Dorsolateral prefrontal cortex (tissue), 120 donors: ENCODE measurements at regions of chr1 and their contacts with region 1.

Region 1: GRCh38 chr1:175887981-175888433 is 144.6 kb upstream of the TNR start:
- DNase-seq: peak; percentile 72 to 89 (median 86)
- H3K4me3 ChIP-seq: peak overlapping the region in 12 of 59 donors; percentile 3 to 37 (median 12)
- H3K27ac ChIP-seq: peak overlapping the region in 37 of 59 donors; percentile 1 to 80 (median 55)
- H3K27me3 ChIP-seq: no peaks in the 10 kb centered on the region
- CTCF ChIP-seq: peak; percentile 63 to 96 (median 91)

Region 2: GRCh38 chr1:175481126-175482066 is 406.6 kb before region 1 on chr1:
- intact Hi-C with region 1: loop called (anchors 1 to 10 kb)
- DNase-seq: no peak
- H3K4me3 ChIP-seq: no peak overlapping the region
- H3K27ac ChIP-seq: no peak overlapping the region
- H3K27me3 ChIP-seq: peaks cover 0 to 4% (median 0%) of the 10 kb centered on the region in 45 donors
- CTCF ChIP-seq: peak; percentile 39 to 77 (median 64)

Region 3: DNA sequence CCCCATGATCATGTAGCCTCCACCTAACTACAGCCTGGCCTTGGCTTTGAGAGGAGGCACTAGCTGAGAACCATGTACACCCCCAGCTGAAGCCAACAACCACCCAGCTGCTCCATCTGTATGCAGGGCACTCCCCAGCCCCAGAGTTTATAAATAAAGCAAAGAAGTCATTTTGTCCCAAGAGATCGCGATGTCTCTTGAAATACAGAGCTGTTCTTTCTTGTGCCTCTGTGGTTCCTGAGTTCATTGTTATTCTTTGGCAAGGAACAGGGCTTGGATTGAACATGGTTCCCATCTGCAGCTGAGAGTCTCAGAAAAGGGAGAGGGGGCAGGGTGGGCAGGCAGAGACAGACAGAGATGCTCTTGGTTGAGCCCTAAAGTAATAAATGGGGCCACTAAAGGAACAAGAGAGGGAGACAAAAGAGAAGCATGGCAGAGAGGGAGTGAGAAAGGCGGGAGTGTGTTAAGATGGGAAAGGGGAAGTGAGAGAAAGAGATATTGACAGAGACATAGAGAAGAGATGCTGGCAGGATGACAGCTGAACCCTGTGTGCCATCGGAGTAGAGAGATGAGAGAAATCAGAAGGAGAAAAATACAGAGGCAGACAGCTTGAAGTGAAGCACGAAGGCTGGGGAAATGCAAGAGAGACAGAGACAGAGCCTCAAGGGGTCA is 207.9 kb before region 1 on chr1:
- intact Hi-C with region 1: loop called (anchors 5 to 10 kb)
- DNase-seq: peak in 8 of 10 donors; percentile 28 to 84 (median 67)
- H3K4me3 ChIP-seq: peak overlapping the region in 4 of 59 donors; percentile 5 to 33 (median 11)
- H3K27ac ChIP-seq: peak overlapping the region in 21 of 59 donors; percentile 4 to 69 (median 41)
- H3K27me3 ChIP-seq: peaks cover 0 to 12% (median 0%) of the 10 kb centered on the region in 45 donors
- CTCF ChIP-seq: peak in 1 of 56 donors; percentile 10

Region 4: DNA sequence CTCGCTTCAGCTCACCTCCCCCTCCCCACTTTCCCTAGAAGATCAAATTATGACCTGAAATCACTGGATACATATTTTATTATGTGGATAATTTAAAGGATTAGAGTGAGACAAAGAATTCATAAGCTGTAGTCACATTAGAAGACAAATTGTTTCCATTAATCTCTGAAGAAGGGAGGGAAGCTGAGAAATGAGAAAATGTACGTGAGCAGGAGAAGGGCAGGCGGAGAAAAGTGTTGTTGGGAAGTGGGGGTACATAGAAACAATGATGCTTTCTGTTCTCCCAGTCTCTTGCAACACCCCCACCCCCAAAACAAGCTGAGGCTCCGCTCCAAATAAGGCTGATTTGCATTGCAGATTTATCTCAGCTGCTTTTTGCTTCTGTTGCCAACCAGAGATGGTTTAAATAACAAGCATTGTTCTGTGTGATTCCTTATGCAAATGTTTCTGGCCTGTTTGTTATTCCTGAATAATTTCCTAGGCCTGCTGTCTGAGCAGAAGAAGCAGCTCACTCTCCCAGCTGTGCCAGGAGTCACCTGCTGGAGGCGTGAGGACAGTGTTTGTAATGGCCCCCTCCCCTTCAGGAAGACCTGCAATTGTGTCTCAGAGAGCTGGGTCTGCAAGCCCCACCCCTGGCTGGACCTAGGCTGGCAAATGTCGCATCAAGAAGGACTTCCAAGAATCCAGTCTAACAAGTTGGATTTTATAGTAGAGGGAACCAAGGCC is 22.8 kb before region 1 on chr1:
- intact Hi-C with region 1: loop called in 1 of 2 experiments (anchors 2 kb)
- DNase-seq: peak in 9 of 10 donors; percentile 53 to 94 (median 83)
- H3K4me3 ChIP-seq: peak overlapping the region in 5 of 59 donors; percentile 6 to 32 (median 20)
- H3K27ac ChIP-seq: peak overlapping the region; percentile 62 to 98 (median 93)
- H3K27me3 ChIP-seq: no peaks in the 10 kb centered on the region
- CTCF ChIP-seq: peak in 14 of 56 donors; percentile 6 to 34 (median 17)